Right cardiac atrium (tissue), 5 donors: ENCODE measurements at regions of chr16 and their contacts with region 1.

Region 1: GRCh38 chr16:17467923-17468540 is 2.7 kb downstream of the XYLT1 start:
- DNase-seq: peak; percentile 65 to 87 (median 83)
- ATAC-seq: peak; percentile 68 to 78
- H3K4me3 ChIP-seq: no peak overlapping the region
- H3K27ac ChIP-seq: no peak overlapping the region
- H3K4me1 ChIP-seq: peaks cover 2% of the 10 kb centered on the region
- H3K27me3 ChIP-seq: no peaks in the 10 kb centered on the region

Region 2: DNA sequence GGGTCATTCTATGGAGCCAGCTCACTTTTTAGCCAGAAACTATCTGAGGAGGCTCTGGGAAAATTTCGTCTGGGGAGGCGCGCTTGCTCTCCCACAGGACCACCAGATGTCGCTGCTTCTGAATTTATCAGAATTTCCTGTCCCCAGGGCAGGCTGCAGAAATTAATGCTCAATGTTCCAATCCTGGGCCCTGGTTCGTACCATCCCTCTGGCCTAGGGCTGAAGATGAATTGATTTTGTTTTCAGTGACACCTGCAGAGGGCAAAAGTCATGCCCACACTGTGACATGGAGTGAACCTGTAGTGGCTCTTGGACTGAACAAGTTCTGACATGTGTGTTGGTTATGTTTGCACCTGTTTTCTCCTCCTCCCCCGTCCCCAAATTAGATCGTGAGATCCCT is 606.5 kb before region 1 on chr16:
- intact Hi-C with region 1: loop called in 2 of 4 experiments (anchors 10 kb)
- DNase-seq: peak; percentile 38 to 61 (median 53)
- ATAC-seq: no peak
- H3K4me3 ChIP-seq: no peak overlapping the region
- H3K27ac ChIP-seq: no peak overlapping the region
- H3K4me1 ChIP-seq: no peaks in the 10 kb centered on the region
- H3K27me3 ChIP-seq: no peaks in the 10 kb centered on the region

Region 3: DNA sequence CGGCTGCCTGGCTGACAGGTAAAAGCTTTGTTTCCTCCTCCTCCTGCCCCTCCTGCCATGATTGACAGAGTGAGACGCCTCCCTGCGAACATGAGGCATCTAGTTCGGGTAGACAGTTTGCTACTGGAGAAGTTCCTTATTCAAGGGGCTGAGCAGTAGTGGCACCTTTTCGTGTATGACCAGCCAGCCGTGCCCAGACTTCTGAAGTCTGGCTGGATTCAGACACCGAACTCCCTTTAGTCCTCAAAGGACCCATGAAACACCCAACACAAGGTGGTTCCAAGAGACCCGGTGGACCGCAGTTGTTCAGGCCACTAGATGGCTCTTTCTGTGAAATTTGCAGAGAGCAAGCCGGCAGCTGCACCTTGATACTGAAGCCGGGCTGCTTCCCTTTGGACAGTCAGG is 190.1 kb before region 1 on chr16:
- intact Hi-C with region 1: loop called in 3 of 4 experiments (anchors 5 to 10 kb)
- DNase-seq: peak; percentile 24 to 73 (median 67)
- ATAC-seq: peak; percentile 47 to 78
- H3K4me3 ChIP-seq: no peak overlapping the region
- H3K27ac ChIP-seq: no peak overlapping the region
- H3K4me1 ChIP-seq: no peaks in the 10 kb centered on the region
- H3K27me3 ChIP-seq: no peaks in the 10 kb centered on the region

Region 4: GRCh38 chr16:17283016-17283415 is 185.0 kb before region 1 on chr16:
- intact Hi-C with region 1: loop called in 3 of 4 experiments (anchors 5 to 10 kb)
- DNase-seq: no peak
- ATAC-seq: no peak
- H3K4me3 ChIP-seq: no peak overlapping the region
- H3K27ac ChIP-seq: no peak overlapping the region
- H3K4me1 ChIP-seq: no peaks in the 10 kb centered on the region
- H3K27me3 ChIP-seq: no peaks in the 10 kb centered on the region

Region 5: GRCh38 chr16:17369421-17370222 is 98.4 kb before region 1 on chr16:
- intact Hi-C with region 1: loop called in 2 of 4 experiments (anchors 10 kb)
- DNase-seq: peak; percentile 55 to 85 (median 80)
- ATAC-seq: peak; percentile 80 to 85
- H3K4me3 ChIP-seq: no peak overlapping the region
- H3K27ac ChIP-seq: peak overlapping the region; percentile 36
- H3K4me1 ChIP-seq: peaks cover 4% of the 10 kb centered on the region
- H3K27me3 ChIP-seq: no peaks in the 10 kb centered on the region

Region 6: GRCh38 chr16:17416461-17417311 is 51.3 kb before region 1 on chr16:
- intact Hi-C with region 1: loop called in 1 of 4 experiments (anchors 10 kb)
- DNase-seq: peak in 2 of 3 donors; percentile 60 to 61
- ATAC-seq: peak; percentile 42 to 73
- H3K4me3 ChIP-seq: no peak overlapping the region
- H3K27ac ChIP-seq: no peak overlapping the region
- H3K4me1 ChIP-seq: peaks cover 5% of the 10 kb centered on the region
- H3K27me3 ChIP-seq: no peaks in the 10 kb centered on the region

Region 7: GRCh38 chr16:17561056-17561455 is 93.0 kb after region 1 on chr16:
- intact Hi-C with region 1: no loop called
- DNase-seq: no peak
- ATAC-seq: no peak
- H3K4me3 ChIP-seq: no peak overlapping the region
- H3K27ac ChIP-seq: no peak overlapping the region
- H3K4me1 ChIP-seq: no peaks in the 10 kb centered on the region
- H3K27me3 ChIP-seq: peaks cover 2% of the 10 kb centered on the region